Transverse colon (tissue), 4 donors: ENCODE measurements at regions of chr2 and their contacts with region 1.

Region 1: GRCh38 chr2:12059616-12060441 is 313.4 kb downstream of the LPIN1 start:
- DNase-seq: no peak
- H3K4me3 ChIP-seq: no peak overlapping the region
- H3K27ac ChIP-seq: no peak overlapping the region
- H3K4me1 ChIP-seq: peaks cover 0 to 11% (median 0%) of the 10 kb centered on the region in 4 donors
- H3K27me3 ChIP-seq: no peaks in the 10 kb centered on the region
- CTCF ChIP-seq: no peak
- EP300 ChIP-seq: no peak
- POLR2A ChIP-seq: no peak

Region 2: DNA sequence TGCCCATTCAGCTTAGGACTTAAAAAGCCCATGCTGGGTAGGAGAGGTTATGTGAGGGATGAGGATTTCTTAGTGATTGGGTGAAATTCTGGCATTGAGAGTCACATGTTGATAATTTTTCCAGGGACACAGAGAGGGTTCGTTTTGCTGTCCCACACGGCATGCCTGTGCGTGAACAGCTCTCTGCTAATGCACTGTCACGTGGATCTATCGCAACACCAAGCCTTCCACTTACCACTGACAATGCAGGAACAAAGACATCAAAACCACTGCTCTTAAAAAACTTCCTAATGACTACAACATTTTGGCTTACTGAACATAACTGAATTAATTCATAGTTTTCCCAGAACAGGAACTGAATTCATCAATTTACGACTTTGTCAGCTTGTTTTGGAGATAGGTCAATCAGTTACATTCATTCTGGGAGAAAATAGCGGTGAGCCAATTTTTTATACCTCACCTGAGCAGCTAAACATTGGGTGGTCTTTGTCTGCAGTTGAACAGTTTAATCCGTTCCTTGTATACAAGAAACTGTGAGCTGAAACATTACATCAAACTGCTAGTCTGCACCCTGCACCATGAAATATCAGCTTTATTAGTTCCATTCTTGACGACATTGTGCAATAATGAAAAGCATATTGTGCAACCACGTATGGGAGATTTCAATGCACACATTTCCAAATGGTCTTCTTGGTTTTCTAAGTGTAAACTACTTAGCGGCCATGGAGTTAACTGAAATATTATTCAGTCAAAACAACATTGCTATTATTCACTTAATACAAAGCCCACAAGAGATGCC is 186.3 kb before region 1 on chr2:
- in situ Hi-C with region 1: loop called in 1 of 4 experiments (anchors 10 kb)
- intact Hi-C with region 1: no loop called
- DNase-seq: no peak
- H3K4me3 ChIP-seq: no peak overlapping the region
- H3K27ac ChIP-seq: no peak overlapping the region
- H3K4me1 ChIP-seq: peaks cover 0 to 10% (median 0%) of the 10 kb centered on the region in 4 donors
- H3K27me3 ChIP-seq: no peaks in the 10 kb centered on the region
- CTCF ChIP-seq: no peak
- EP300 ChIP-seq: no peak
- POLR2A ChIP-seq: no peak

Region 3: GRCh38 chr2:12027136-12027535 is 32.7 kb before region 1 on chr2:
- in situ Hi-C with region 1: no loop called
- intact Hi-C with region 1: no loop called
- DNase-seq: no peak
- H3K4me3 ChIP-seq: no peak overlapping the region
- H3K27ac ChIP-seq: no peak overlapping the region
- H3K4me1 ChIP-seq: no peaks in the 10 kb centered on the region
- H3K27me3 ChIP-seq: no peaks in the 10 kb centered on the region
- CTCF ChIP-seq: no peak
- EP300 ChIP-seq: no peak
- POLR2A ChIP-seq: no peak

Region 4: DNA sequence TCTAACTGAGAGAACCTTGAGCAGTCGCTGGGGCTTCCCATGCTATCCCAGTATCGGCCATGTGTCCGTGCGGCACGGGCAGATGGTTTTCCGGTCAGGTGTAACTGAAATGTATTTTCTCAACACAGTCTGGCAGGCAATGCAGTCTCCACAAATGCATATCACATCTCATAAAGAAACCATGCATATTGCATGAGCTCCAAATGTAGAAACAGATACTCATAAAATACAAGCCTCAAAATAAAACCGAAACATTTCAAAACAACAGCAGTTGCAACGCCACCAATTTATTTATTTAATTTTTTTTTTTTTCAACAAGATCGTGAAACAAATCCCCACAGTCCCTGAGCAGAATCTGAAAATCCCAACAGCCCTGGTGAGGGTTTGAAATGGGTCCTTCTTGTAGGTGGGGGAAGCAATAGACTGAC is 14.0 kb before region 1 on chr2:
- in situ Hi-C with region 1: no loop called
- intact Hi-C with region 1: loop called (anchors 2 kb)
- DNase-seq: no peak
- H3K4me3 ChIP-seq: no peak overlapping the region
- H3K27ac ChIP-seq: no peak overlapping the region
- H3K4me1 ChIP-seq: peaks cover 0 to 4% (median 0%) of the 10 kb centered on the region in 4 donors
- H3K27me3 ChIP-seq: no peaks in the 10 kb centered on the region
- CTCF ChIP-seq: no peak
- EP300 ChIP-seq: no peak
- POLR2A ChIP-seq: no peak